ENCODE measurements at regions of chr18 and their contacts with region 1.

Region 1: GRCh38 chr18:56799756-56800155 is 148.6 kb downstream of the WDR7 start:
- DNase-seq: peak; percentile 39
- ATAC-seq: peak; percentile 82
- H3K4me3 ChIP-seq: no peak overlapping the region
- H3K27ac ChIP-seq: no peak overlapping the region
- H3K4me1 ChIP-seq: peaks cover 24% of the 10 kb centered on the region
- H3K27me3 ChIP-seq: no peaks in the 10 kb centered on the region
- CTCF ChIP-seq: no peak

Region 2: GRCh38 chr18:56565551-56566345 is 234.0 kb before region 1 on chr18:
- CTCF ChIA-PET with region 1: no interaction called
- POLR2A ChIA-PET with region 1: no interaction called
- intact Hi-C with region 1: no loop called
- DNase-seq: peak; percentile 67
- ATAC-seq: peak; percentile 37; the same call in 1 of the 2 replicates
- H3K4me3 ChIP-seq: no peak overlapping the region
- H3K27ac ChIP-seq: peak overlapping the region; percentile 31
- H3K4me1 ChIP-seq: peaks cover 19% of the 10 kb centered on the region
- H3K27me3 ChIP-seq: no peaks in the 10 kb centered on the region
- CTCF ChIP-seq: no peak

Region 3: DNA sequence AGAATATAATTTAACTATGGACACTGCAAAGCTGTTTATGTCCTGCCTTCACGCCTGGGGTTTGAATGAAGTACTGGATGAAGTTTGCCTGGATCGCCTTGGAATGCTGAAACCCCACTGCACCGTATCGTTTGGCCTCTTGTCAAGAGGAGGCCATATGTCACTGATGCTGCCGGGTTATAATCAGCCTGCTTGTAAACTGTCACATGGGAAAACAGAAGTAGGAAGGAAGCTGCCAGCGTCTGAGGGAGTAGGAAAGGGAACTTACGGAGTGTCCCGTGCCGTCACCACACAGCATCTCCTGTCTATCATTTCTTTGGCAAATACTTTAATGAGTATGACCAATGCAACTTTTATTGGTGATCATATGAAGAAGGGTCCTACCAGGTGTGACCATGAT is 42.8 kb before region 1 on chr18:
- CTCF ChIA-PET with region 1: no interaction called
- POLR2A ChIA-PET with region 1: no interaction called
- intact Hi-C with region 1: loop called (anchors 5 kb)
- DNase-seq: no peak
- ATAC-seq: no peak
- H3K4me3 ChIP-seq: no peak overlapping the region
- H3K27ac ChIP-seq: no peak overlapping the region
- H3K4me1 ChIP-seq: no peaks in the 10 kb centered on the region
- H3K27me3 ChIP-seq: no peaks in the 10 kb centered on the region
- CTCF ChIP-seq: no peak

Region 4: GRCh38 chr18:56823986-56824565 is 24.3 kb after region 1 on chr18:
- CTCF ChIA-PET with region 1: no interaction called
- POLR2A ChIA-PET with region 1: no interaction called
- intact Hi-C with region 1: no loop called
- DNase-seq: peak; percentile 4
- ATAC-seq: no peak; the same call in 1 of the 2 replicates
- H3K4me3 ChIP-seq: no peak overlapping the region
- H3K27ac ChIP-seq: no peak overlapping the region
- H3K4me1 ChIP-seq: no peaks in the 10 kb centered on the region
- H3K27me3 ChIP-seq: no peaks in the 10 kb centered on the region
- CTCF ChIP-seq: no peak